ENCODE measurements at regions of chr1 and their contacts with region 1.

Region 1: GRCh38 chr1:148318123-148318903 is 164.8 kb downstream of the PPIAL4G start:
- DNase-seq: peak; percentile 75
- H3K4me3 Mint-ChIP-seq: peak overlapping the region; percentile 89
- H3K27ac Mint-ChIP-seq: peak overlapping the region; percentile 90
- H3K4me1 Mint-ChIP-seq: peaks cover 44% of the 10 kb centered on the region
- H3K27me3 Mint-ChIP-seq: peaks cover 11% of the 10 kb centered on the region

Region 2: GRCh38 chr1:148263128-148263905 is 55.0 kb before region 1 on chr1:
- intact Hi-C with region 1: loop called (anchors 5 kb)
- DNase-seq: peak; percentile 48
- H3K4me3 Mint-ChIP-seq: peak overlapping the region; percentile 87
- H3K27ac Mint-ChIP-seq: peak overlapping the region; percentile 88
- H3K4me1 Mint-ChIP-seq: peaks cover 16% of the 10 kb centered on the region
- H3K27me3 Mint-ChIP-seq: peaks cover 38% of the 10 kb centered on the region

Region 3: GRCh38 chr1:148307583-148308190 is 10.6 kb before region 1 on chr1:
- intact Hi-C with region 1: loop called (anchors 2 kb)
- DNase-seq: no peak
- H3K4me3 Mint-ChIP-seq: no peak overlapping the region
- H3K27ac Mint-ChIP-seq: no peak overlapping the region
- H3K4me1 Mint-ChIP-seq: peaks cover 28% of the 10 kb centered on the region
- H3K27me3 Mint-ChIP-seq: peaks cover 28% of the 10 kb centered on the region